Left cardiac atrium (tissue), 4 donors: ENCODE measurements at regions of chrX and their contacts with region 1.

Region 1: DNA sequence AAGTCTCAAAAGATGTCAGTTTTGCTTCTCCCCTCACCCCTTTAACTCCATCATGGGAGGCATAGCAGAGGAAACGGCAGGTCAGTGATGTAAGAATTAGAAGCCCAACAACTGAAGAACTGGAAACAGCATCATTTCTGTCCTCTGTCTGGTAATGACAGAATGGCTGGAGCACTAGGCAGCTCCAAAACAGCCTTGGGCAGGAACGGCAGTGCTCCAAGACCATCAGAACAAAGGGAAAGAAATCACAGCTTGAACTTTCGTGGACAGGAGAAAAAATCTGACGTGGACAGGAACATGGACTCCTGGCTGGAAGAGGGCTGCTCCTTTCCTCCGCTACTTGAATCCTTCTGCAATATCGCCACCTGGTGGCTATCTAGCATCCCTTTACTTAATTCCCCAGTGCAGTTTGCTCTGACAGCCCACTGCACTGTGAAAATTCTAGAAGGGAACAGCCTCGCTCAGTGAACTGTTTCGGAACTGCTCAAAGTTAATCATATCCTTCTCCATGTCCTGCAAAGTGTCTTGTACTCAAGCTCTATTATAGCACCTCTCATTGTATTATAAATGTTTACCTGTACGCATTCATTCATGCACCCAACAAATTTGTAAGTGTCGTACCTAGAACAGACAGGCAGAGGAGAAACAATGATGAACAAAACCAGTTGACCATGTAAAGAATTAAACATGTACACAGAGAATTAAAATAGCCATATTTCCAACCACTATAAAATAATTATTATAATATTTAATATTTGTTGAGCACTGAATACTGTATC is 20.4 kb downstream of the SLC25A53 start:
- DNase-seq: peak; percentile 68
- ATAC-seq: peak; percentile 87 to 92

Region 2: DNA sequence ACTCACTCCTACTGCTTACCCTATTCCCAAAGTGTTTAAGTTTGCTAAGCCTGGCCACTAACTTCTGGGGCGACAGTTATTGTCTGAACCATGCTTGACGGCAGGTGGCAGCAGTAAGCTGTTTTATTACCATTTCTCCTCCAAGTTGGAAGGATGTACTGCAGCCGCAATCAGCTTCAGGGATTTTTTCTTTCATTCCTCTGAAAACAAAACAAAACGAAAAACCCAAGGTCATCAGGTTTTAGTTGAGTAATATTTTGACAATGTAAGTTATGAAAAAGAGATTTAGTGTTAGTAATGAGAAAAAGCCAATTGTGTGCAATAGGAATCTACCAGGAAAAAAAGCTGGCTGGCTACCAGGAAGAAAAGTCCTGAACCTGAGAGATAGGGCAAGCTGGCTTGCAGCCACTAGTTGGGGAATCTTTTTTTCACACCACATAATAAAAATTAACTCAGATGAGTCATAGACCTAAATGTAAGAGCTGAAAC is 291.2 kb before region 1 on chrX:
- intact Hi-C with region 1: loop called in 1 of 2 experiments (anchors 5 kb)
- DNase-seq: peak; percentile 52
- ATAC-seq: peak; percentile 78 to 92

Region 3: GRCh38 chrX:104098151-104098808 is 38.1 kb before region 1 on chrX:
- intact Hi-C with region 1: loop called in 1 of 2 experiments (anchors 2 kb)
- DNase-seq: peak; percentile 38
- ATAC-seq: peak; percentile 53 to 55

Region 4: GRCh38 chrX:104538336-104538735 is 401.9 kb after region 1 on chrX:
- intact Hi-C with region 1: no loop called
- DNase-seq: no peak
- ATAC-seq: no peak